Body of pancreas (tissue), 4 donors: ENCODE measurements at regions of chr9 and their contacts with region 1.

Region 1: GRCh38 chr9:131739980-131740648 is at the start of gene RAPGEF1:
- DNase-seq: peak; percentile 53 to 78 (median 70)
- ATAC-seq: peak; percentile 72
- H3K4me3 ChIP-seq: peak within 1 kb of the TSS in 1 of 2 donors; percentile 16
- H3K27ac ChIP-seq: peak within 1 kb of the TSS; percentile 78 to 86 (median 82)
- H3K4me1 ChIP-seq: peaks cover 57% of the 10 kb centered on the region
- H3K27me3 ChIP-seq: no peaks in the 10 kb centered on the region
- CTCF ChIP-seq: peak; percentile 66 to 100 (median 93)
- POLR2A ChIP-seq: no peak
- total RNA-seq, gene RAPGEF1: 30.1 to 70.5 TPM

Region 2: GRCh38 chr9:131590908-131591844 is 148.9 kb before region 1 on chr9:
- intact Hi-C with region 1: loop called (anchors 5 kb)
- DNase-seq: peak; percentile 82 to 85 (median 83)
- ATAC-seq: peak; percentile 90
- H3K4me3 ChIP-seq: no peak overlapping the region
- H3K27ac ChIP-seq: no peak overlapping the region
- H3K4me1 ChIP-seq: no peaks in the 10 kb centered on the region
- H3K27me3 ChIP-seq: no peaks in the 10 kb centered on the region
- CTCF ChIP-seq: peak; percentile 70 to 93 (median 90)
- POLR2A ChIP-seq: no peak

Region 3: DNA sequence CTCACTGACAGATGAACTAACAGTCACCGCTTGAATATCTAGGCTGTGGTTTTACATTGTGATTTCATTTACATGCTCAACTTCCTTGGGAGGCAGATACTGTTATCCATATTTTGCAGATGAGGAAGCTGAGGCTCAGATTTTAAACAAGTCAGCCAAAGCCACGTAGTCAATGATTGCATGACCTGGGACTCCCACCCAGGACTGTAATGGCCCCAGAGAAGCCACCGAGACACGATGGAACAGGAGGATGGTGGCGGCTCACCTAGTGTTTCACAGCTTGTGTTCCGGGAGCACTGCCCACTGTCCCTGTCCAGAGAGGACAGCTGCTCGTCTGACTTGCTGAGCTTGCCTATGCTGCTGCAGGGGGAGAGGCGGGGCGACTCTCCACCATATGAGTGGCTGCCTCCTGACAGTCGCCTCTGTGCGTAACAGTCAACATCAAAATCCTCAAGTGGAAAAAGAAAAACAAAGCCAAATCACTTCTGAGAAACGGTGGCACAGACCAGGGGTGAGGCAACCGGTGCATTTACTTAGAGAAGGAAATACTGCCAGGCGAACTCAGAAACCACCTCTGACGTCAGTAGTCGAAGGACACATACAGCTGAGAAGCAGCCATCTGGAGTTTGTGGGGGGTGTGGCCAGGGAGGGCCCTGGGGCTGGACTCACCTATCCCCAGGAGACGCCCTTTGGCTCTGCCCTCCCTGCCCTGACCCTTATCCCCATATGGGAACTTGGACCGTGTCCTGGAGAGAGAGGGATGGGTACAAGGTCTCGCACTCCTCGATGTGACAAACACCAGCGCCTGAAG is 112.3 kb before region 1 on chr9:
- intact Hi-C with region 1: loop called (anchors 10 kb)
- DNase-seq: peak; percentile 96 to 99 (median 98)
- ATAC-seq: peak; percentile 90
- H3K4me3 ChIP-seq: no peak overlapping the region
- H3K27ac ChIP-seq: peak overlapping the region; percentile 92 to 97 (median 95)
- H3K4me1 ChIP-seq: peaks cover 68% of the 10 kb centered on the region
- H3K27me3 ChIP-seq: no peaks in the 10 kb centered on the region
- CTCF ChIP-seq: peak in 2 of 7 experiments; percentile 6 to 9
- POLR2A ChIP-seq: peak; percentile 89 to 99 (median 98)

Region 4: DNA sequence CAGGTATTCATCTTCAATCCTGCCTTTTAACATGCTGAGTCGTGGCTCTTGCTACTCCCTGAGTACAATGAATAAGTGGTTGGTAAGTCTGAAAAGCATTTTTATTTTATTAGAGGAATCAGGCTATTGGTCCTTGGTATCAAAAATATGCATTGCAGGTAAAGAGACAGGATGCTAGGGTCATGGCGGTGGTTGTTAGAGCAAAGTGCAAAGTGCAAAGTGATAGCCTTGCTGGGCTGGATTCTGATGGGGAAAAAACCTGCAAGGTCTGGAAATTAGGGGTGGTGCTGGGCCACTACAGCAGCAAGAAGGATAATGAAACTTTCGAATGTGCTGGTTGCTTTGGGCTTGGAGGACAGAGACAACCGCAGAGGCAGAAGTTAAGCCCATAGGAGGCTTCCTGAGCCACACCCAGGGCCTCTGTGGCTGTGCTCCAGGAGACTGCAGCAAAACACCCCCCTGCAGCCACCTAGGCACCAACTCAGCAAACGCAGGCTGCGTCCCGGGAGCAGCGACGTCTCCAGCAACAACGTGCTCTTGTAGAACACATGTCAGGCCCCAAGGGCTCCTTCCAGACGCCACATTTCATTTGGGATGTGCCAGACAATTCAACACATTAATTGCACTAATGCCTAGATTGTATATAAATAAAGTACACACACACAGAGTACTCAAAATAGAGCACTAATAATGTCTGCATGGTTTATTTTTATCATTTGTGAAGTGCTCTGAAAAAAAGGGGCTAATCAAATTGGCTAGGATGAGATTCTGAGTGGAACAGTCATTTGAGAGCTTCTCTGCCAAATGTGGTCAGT is 149.5 kb after region 1 on chr9:
- intact Hi-C with region 1: no loop called
- DNase-seq: no peak
- ATAC-seq: no peak
- H3K4me3 ChIP-seq: no peak overlapping the region
- H3K27ac ChIP-seq: no peak overlapping the region
- H3K4me1 ChIP-seq: no peaks in the 10 kb centered on the region
- H3K27me3 ChIP-seq: no peaks in the 10 kb centered on the region
- CTCF ChIP-seq: no peak
- POLR2A ChIP-seq: no peak